Left lung (tissue), 14 donors: ENCODE measurements at regions of chr10 and their contacts with region 1.

Region 1: DNA sequence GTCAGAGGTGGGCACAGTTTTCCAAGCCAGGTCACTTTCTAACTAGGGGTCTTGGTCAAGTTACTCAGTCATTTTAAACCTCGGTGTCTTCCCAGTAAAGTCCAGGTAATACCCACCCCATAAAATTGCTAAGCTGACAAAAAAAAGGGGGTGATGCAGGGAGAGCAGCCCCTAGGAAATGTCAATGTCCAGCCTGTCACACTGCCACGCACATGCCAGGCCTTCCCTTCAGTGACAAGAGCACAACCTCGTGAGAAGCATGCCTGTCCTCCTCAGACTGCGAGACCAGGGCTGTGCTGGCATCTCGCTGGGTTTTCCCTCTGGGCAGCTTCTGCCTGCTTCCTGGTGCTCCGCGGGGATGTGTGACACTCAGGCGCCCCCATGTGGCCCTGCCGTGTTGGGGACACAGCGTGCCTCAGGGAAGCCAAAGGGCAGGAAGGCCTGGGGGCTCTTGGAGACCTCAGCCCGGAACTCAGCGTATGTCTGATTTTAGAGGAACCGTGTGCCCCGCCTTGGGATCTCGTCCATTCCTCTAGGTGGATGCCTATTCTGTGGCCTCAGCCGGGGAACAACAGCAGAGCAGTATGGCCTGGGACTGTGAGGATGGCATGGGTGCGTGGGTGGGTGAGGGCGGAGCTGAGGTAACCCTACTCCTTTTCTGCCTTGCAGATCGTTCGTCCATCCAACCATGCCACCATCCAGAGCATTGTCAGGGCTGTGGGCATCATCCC is 10.2 kb upstream of the GDF2 start:
- DNase-seq: peak; percentile 53 to 95 (median 80)
- ATAC-seq: peak; percentile 99
- H3K4me3 ChIP-seq: no peak overlapping the region
- H3K27ac ChIP-seq: no peak overlapping the region
- H3K4me1 ChIP-seq: peaks cover 0 to 6% of the 10 kb centered on the region in 2 donors
- H3K27me3 ChIP-seq: peaks cover 0 to 25% of the 10 kb centered on the region in 2 donors
- CTCF ChIP-seq: peak; percentile 68 to 83

Region 2: DNA sequence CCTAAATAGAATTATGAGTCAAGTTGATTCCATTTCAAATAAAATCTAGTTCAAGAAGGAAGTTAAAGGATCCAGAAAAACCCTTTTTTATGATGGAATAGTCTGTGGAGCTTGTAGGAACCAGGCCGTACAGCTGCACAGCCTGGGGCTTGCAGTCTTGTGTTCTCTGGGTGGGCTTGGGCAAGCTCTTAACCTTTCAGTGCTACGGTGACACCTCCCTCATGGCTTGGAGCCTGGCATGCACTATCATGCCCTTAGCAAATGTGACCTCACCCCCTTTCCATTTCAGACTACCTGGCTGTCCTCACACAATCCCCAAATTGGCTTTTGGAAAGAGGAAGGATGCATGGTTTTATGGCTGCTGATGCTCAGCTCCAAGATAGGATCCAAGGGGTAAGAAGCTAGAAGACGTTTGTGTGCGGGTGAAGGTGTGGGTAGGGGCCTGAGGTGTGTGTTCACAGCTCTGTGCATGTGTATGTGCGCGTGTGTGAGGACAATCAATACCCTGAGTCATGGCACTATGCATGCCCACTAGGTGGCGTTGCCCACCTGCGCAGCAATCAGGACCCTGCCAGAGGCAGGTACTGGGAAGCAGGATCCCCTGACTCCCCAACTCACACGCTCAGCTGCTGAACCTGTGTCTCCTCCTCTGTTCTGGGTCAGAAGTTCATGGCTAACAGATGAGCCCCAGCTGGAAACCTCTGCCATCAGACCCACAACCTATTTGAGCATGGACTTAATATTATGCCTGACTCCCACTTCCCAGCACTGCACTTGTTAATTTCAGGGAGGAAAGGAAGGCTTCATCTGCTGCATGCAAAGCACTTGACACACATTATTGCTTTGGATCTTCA is 287.5 kb before region 1 on chr10:
- intact Hi-C with region 1: loop called in 1 of 2 experiments (anchors 10 kb)
- DNase-seq: peak in 3 of 4 donors; percentile 40 to 81 (median 70)
- ATAC-seq: peak; percentile 83
- H3K4me3 ChIP-seq: no peak overlapping the region
- H3K27ac ChIP-seq: no peak overlapping the region
- H3K4me1 ChIP-seq: no peaks in the 10 kb centered on the region
- H3K27me3 ChIP-seq: no peaks in the 10 kb centered on the region
- CTCF ChIP-seq: peak; percentile 63 to 71

Region 3: GRCh38 chr10:47047671-47048525 is 264.2 kb before region 1 on chr10:
- intact Hi-C with region 1: loop called in 1 of 2 experiments (anchors 10 kb)
- DNase-seq: peak; percentile 73 to 94 (median 85)
- ATAC-seq: peak; percentile 90
- H3K4me3 ChIP-seq: no peak overlapping the region
- H3K27ac ChIP-seq: no peak overlapping the region
- H3K4me1 ChIP-seq: peaks cover 0 to 6% of the 10 kb centered on the region in 2 donors
- H3K27me3 ChIP-seq: no peaks in the 10 kb centered on the region
- CTCF ChIP-seq: peak; percentile 89 to 91

Region 4: DNA sequence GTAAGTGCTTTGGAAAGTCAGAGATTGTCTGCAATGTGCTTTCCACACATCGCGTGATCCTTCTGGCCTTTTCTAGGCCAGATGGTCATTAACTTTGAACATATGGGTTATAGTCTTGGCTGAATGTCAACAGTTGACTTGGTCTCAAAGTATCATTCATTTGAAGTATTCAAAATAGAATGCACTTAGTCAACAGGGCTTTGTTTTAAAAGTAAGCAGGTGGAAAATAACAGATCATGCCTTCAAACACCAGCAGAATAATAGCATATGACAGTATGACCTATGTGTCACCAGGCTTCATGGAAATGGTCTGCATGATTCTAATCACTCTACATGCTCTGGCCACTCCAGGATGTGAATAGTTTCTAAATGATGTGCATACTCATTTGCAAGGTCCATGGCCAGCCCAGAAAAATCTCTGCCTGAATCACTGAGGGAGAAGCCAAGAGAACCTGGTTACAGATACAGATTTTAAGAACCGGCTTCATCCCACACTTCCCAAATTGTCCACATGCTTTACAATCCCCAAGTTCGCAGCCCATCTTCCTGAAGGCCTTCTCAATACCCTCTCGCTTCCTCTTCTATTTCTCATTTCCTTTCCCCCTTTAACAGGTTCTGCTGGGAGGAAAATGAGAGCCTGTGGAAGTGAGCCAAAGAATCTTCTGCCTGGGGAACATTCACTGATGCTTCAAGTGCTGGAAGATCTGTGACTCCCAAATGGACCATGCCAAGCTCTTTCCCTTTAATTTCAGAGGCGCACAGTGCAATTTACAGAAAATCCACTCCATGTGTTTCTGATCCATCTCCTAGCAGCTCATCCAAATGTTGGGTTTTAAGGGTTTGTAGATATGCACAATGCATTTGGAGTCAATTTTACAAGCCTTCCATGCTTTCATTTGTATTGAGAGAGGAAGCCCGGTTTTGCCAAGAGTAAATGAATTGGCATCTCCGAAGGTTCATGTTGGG is 134.9 kb before region 1 on chr10:
- intact Hi-C with region 1: no loop called
- DNase-seq: no peak
- ATAC-seq: peak; percentile 19
- H3K4me3 ChIP-seq: no peak overlapping the region
- H3K27ac ChIP-seq: no peak overlapping the region
- H3K4me1 ChIP-seq: no peaks in the 10 kb centered on the region
- H3K27me3 ChIP-seq: no peaks in the 10 kb centered on the region
- CTCF ChIP-seq: no peak